ENCODE measurements at regions of chr9 and their contacts with region 1.

Region 1: DNA sequence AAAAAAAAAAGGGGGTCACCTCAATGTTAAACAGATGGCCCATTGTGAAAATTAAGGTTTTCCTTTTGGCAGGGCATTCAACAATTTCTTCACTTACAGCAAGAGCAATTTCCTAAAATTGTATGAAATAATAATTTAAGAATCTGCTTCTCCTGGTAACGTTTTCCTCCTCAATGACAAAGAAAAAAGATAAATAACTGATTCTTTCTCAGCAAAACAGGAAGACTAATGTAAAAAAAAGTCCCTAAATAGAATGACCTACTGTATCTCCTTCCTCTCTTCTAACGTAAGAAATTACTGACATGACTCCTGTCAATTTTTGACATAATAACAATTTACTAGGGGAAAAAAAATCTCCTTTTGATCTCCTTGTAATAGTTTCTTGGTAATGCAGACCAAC is 25.5 kb downstream of the ABHD17B start:
- DNase-seq: no peak
- ATAC-seq: peak; percentile 31
- H3K4me3 Mint-ChIP-seq: peak overlapping the region; percentile 11
- H3K27ac Mint-ChIP-seq: peak overlapping the region; percentile 73
- H3K4me1 Mint-ChIP-seq: peaks cover 43% of the 10 kb centered on the region
- H3K27me3 Mint-ChIP-seq: no peaks in the 10 kb centered on the region
- CTCF ChIP-seq: no peak

Region 2: GRCh38 chr9:71921190-71921814 is 35.8 kb after region 1 on chr9:
- CTCF ChIA-PET with region 1: no interaction called
- POLR2A ChIA-PET with region 1: no interaction called
- intact Hi-C with region 1: loop called (anchors 5 kb)
- DNase-seq: no peak
- ATAC-seq: no peak
- H3K4me3 Mint-ChIP-seq: no peak overlapping the region
- H3K27ac Mint-ChIP-seq: no peak overlapping the region
- H3K4me1 Mint-ChIP-seq: peaks cover 11% of the 10 kb centered on the region
- H3K27me3 Mint-ChIP-seq: no peaks in the 10 kb centered on the region
- CTCF ChIP-seq: no peak